ENCODE measurements at regions of chrX and their contacts with region 1.

Region 1: GRCh38 chrX:6738518-6739470 is 203.9 kb upstream of the VCX3A start:
- DNase-seq: no peak
- ATAC-seq: no peak
- H3K4me3 ChIP-seq: no peak overlapping the region
- H3K27ac ChIP-seq: no peak overlapping the region
- H3K4me1 ChIP-seq: no peaks in the 10 kb centered on the region
- H3K27me3 ChIP-seq: no peaks in the 10 kb centered on the region
- CTCF ChIP-seq: no peak
- POLR2A ChIP-seq: no peak
- RAD21 ChIP-seq: no peak

Region 2: GRCh38 chrX:7191681-7192110 is 452.9 kb after region 1 on chrX:
- CTCF ChIA-PET with region 1: no interaction called
- POLR2A ChIA-PET with region 1: interaction called, 12 read pairs
- dilution Hi-C with region 1: no loop called
- in situ Hi-C with region 1: no loop called
- intact Hi-C with region 1: no loop called
- DNase-seq: peak; percentile 5
- ATAC-seq: no peak
- H3K4me3 ChIP-seq: no peak overlapping the region
- H3K27ac ChIP-seq: no peak overlapping the region
- H3K4me1 ChIP-seq: no peaks in the 10 kb centered on the region
- H3K27me3 ChIP-seq: no peaks in the 10 kb centered on the region
- CTCF ChIP-seq: peak; percentile 29
- POLR2A ChIP-seq: no peak
- RAD21 ChIP-seq: peak; percentile 27; the same call in 1 of the 2 replicates

Measured in IMR-90 (cell line).